H1 (cell line): ENCODE measurements at regions of chr1 and their contacts with region 1.

Region 1: DNA sequence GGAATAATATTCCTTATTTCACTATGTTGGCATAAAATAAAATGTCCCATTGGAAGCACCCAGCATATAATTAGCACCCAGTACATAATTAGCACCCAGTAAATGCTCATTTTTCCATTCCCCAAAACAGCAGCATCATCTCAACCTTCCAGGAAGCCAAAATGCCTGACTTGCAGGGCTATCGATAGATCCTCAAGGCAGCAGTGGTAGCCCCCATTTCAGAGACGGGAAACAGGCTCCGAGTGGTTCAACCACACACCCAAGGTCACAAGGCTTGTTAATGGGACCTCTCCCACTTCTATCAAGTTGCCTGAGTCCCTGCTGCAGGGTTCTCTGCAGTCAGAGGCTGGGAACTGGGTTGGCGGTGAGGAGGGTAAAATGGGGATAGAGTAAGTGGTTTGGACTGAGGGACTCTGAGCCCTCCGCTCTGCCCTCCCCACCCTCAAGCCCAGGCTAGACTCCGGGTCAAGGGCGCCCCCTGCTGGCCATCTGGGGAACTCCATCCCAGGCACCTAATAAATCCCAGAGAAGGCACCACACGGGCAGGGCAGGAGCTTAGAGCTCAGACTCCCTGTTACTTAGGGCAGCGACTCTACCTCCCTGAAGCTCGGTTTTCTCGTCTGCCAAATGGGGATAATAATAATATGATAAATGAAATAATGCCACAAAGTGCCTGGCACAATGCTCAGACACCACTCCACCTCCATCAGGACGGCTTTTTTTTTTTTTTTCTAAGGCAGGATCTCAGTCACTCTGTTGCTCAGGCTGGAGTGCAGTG is 21.9 kb upstream of the LAPTM5 start:
- DNase-seq: peak; percentile 70 to 100
- H3K4me3 ChIP-seq: no peak overlapping the region
- H3K27ac ChIP-seq: no peak overlapping the region
- H3K4me1 ChIP-seq: peaks cover 0 to 4% (median 2%) of the 10 kb centered on the region in 4 experiments; a peak in 4 of 7 replicates
- H3K27me3 ChIP-seq: no peaks in the 10 kb centered on the region
- CTCF ChIP-seq: peak; percentile 94 to 96 (median 95)
- EP300 ChIP-seq: no peak
- POLR2A ChIP-seq: no peak
- RAD21 ChIP-seq: peak; percentile 97 to 99

Region 2: GRCh38 chr1:30768830-30769718 is 10.4 kb before region 1 on chr1:
- CTCF ChIA-PET with region 1: interaction called, 1,640 read pairs
- POLR2A ChIA-PET with region 1: interaction called, 3 read pairs
- DNase-seq: no peak
- H3K4me3 ChIP-seq: no peak overlapping the region
- H3K27ac ChIP-seq: no peak overlapping the region
- H3K4me1 ChIP-seq: no peaks in the 10 kb centered on the region; a peak in 1 of 7 replicates
- H3K27me3 ChIP-seq: no peaks in the 10 kb centered on the region
- CTCF ChIP-seq: no peak
- EP300 ChIP-seq: no peak
- POLR2A ChIP-seq: no peak
- RAD21 ChIP-seq: no peak

Region 3: DNA sequence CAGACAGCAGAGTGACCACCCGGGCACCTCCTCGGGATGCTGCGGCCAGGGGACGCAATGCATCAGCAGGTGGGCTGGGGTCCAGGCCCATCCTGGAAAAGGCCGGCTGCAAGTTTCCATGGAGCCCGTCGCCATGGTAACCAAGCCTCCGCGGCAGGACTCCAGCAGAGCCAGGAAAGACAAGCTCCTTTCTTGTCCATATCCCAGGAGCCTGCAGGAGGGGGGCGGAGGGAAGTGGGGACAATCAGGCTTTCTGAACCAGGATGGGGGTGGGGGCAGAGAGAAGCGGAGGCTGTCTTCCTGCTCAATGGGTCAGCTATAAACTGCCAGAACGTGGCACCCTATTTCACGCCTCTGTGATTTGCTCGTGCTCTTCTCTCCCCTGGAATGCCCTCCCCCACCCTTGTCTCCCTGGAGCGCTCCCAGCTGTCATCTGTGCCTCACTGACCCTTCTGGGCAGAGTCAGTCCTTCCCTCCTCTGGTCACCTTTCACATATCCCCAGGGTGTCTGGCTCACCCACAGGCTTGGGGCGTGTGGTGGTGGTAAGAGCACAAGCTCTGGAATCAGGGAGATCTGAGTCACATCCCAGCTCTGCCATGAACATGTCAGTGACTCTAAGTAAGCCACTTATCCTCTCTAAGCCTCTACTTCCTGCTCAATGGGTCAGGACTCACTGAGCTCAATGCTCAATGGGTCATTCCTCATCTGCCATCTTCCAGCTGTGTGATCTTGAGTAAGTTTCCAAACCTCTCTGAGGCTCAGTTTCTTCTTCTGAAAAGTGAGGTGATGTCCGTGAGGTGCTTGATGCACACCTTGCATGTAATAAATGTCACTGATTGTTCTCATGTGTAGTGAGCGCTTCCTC is 37.0 kb after region 1 on chr1:
- CTCF ChIA-PET with region 1: interaction called, 329 read pairs
- POLR2A ChIA-PET with region 1: no interaction called
- DNase-seq: peak in 1 of 2 experiments; percentile 93
- H3K4me3 ChIP-seq: peak overlapping the region in 2 of 4 experiments; percentile 8 to 29; a peak in 2 of 8 replicates
- H3K27ac ChIP-seq: no peak overlapping the region
- H3K4me1 ChIP-seq: peaks cover 13 to 28% (median 17%) of the 10 kb centered on the region in 4 experiments
- H3K27me3 ChIP-seq: no peaks in the 10 kb centered on the region
- CTCF ChIP-seq: no peak
- EP300 ChIP-seq: no peak
- POLR2A ChIP-seq: no peak
- RAD21 ChIP-seq: no peak

Region 4: GRCh38 chr1:30888391-30888790 is 108.9 kb after region 1 on chr1:
- CTCF ChIA-PET with region 1: interaction called, 11 read pairs
- POLR2A ChIA-PET with region 1: no interaction called
- DNase-seq: no peak
- H3K4me3 ChIP-seq: no peak overlapping the region
- H3K27ac ChIP-seq: no peak overlapping the region
- H3K4me1 ChIP-seq: peaks cover 9 to 29% (median 18%) of the 10 kb centered on the region in 4 experiments
- H3K27me3 ChIP-seq: no peaks in the 10 kb centered on the region; a peak in 1 of 7 replicates
- CTCF ChIP-seq: no peak
- EP300 ChIP-seq: no peak
- POLR2A ChIP-seq: no peak
- RAD21 ChIP-seq: no peak